ENCODE measurements at regions of chr14 and their contacts with region 1.

Region 1: DNA sequence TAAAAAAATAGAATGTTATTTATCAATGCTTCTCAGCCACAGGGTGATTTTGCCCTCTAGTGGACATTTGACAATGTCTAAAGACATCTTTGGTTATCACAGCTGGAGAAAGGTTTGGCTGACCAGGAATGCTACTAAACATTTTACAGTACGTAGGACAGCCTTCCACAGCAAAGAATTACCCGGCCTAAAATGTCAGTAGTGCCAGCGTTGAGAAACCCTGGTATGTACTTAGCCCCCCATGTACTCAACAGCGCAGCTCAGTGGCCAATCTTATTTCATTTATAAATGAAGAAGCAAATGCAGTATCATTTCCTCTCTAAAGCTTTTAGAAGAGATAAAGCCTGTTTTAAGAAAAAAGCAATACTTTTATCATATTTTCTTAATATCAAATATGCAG is 5.8 kb downstream of the MARK3 start:
- DNase-seq: peak; percentile 72
- ATAC-seq: peak; percentile 77
- H3K4me3 Mint-ChIP-seq: no peak overlapping the region
- H3K27ac Mint-ChIP-seq: no peak overlapping the region
- H3K4me1 Mint-ChIP-seq: peaks cover 59% of the 10 kb centered on the region
- H3K27me3 Mint-ChIP-seq: no peaks in the 10 kb centered on the region
- CTCF ChIP-seq: peak; percentile 86

Region 2: GRCh38 chr14:103333754-103334643 is 57.0 kb before region 1 on chr14 and contains the start of gene EIF5:
- CTCF ChIA-PET with region 1: interaction called, 94 read pairs
- POLR2A ChIA-PET with region 1: interaction called, 5 read pairs
- intact Hi-C with region 1: loop called (anchors 5 kb)
- DNase-seq: peak; percentile 99
- ATAC-seq: peak; percentile 92
- H3K4me3 Mint-ChIP-seq: peak within 1 kb of the TSS; percentile 87
- H3K27ac Mint-ChIP-seq: peak within 1 kb of the TSS; percentile 95
- H3K4me1 Mint-ChIP-seq: peaks cover 56% of the 10 kb centered on the region
- H3K27me3 Mint-ChIP-seq: no peaks in the 10 kb centered on the region
- CTCF ChIP-seq: no peak
- total RNA-seq, gene EIF5: 202 to 207 TPM

Region 3: GRCh38 chr14:103356024-103356682 is 34.9 kb before region 1 on chr14:
- CTCF ChIA-PET with region 1: interaction called, 13 read pairs
- POLR2A ChIA-PET with region 1: no interaction called
- intact Hi-C with region 1: no loop called
- DNase-seq: no peak
- ATAC-seq: no peak
- H3K4me3 Mint-ChIP-seq: no peak overlapping the region
- H3K27ac Mint-ChIP-seq: no peak overlapping the region
- H3K4me1 Mint-ChIP-seq: peaks cover 2% of the 10 kb centered on the region
- H3K27me3 Mint-ChIP-seq: peaks cover 7% of the 10 kb centered on the region
- CTCF ChIP-seq: no peak

Region 4: GRCh38 chr14:103378038-103378854 is 12.8 kb before region 1 on chr14:
- CTCF ChIA-PET with region 1: interaction called, 14 read pairs
- POLR2A ChIA-PET with region 1: no interaction called
- intact Hi-C with region 1: no loop called
- DNase-seq: no peak
- ATAC-seq: no peak
- H3K4me3 Mint-ChIP-seq: no peak overlapping the region
- H3K27ac Mint-ChIP-seq: no peak overlapping the region
- H3K4me1 Mint-ChIP-seq: peaks cover 9% of the 10 kb centered on the region
- H3K27me3 Mint-ChIP-seq: peaks cover 5% of the 10 kb centered on the region
- CTCF ChIP-seq: no peak

Region 5: DNA sequence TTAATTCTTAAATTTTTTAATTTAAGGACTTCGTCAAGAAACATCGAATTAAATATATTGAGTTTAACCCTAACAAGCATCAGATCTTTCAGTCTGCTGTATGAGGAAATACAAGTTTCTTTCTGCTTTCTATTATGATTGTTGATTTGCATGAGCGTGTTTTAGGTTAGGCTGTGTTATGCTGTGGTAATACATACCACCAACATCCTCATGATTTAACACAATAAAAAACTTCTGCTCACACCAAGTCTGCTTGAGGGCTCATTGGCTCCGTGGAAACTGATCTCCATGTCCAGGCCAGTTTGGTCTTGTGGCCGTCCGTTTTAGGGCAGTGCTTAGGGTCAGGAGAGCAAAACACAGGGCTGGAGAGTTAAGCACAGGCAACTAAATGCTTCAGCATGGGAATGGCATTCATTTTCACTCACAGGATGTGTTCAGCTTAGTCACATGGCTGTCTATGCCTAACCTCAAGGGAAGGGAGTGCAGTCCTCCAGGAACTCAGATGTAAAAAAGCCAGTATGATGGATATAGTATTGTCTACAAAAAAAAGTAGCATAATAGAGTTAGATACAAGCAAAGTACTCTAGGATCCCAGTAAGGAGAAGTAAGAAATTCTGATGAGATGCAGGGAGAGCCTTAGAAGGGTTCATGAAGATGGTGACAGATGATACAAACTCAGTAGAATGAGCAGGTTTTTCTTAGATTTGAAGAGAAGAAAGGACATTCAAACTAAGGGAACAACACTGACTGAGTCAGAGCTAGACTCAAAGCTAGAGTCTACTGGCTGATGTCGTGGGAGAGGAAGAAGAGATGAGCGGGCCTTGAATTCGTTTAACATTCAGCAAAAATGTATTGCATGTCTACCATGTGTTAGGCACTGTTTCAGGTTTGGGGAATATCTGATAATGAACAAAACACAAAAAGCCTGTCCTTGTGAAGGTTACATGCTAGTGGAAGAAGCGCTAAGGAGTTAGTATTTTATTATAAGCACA is 10.5 kb after region 1 on chr14:
- CTCF ChIA-PET with region 1: interaction called, 56 read pairs
- POLR2A ChIA-PET with region 1: interaction called, 3 read pairs
- intact Hi-C with region 1: no loop called
- DNase-seq: peak; percentile 28
- ATAC-seq: peak; percentile 84
- H3K4me3 Mint-ChIP-seq: no peak overlapping the region
- H3K27ac Mint-ChIP-seq: peak overlapping the region; percentile 79
- H3K4me1 Mint-ChIP-seq: peaks cover 59% of the 10 kb centered on the region
- H3K27me3 Mint-ChIP-seq: no peaks in the 10 kb centered on the region
- CTCF ChIP-seq: no peak

Region 6: GRCh38 chr14:103418481-103418818 is 27.4 kb after region 1 on chr14:
- CTCF ChIA-PET with region 1: interaction called, 60 read pairs
- POLR2A ChIA-PET with region 1: no interaction called
- intact Hi-C with region 1: no loop called
- DNase-seq: no peak
- ATAC-seq: no peak
- H3K4me3 Mint-ChIP-seq: no peak overlapping the region
- H3K27ac Mint-ChIP-seq: peak overlapping the region; percentile 67
- H3K4me1 Mint-ChIP-seq: peaks cover 44% of the 10 kb centered on the region
- H3K27me3 Mint-ChIP-seq: no peaks in the 10 kb centered on the region
- CTCF ChIP-seq: no peak

Region 7: GRCh38 chr14:103427485-103428443 is 36.7 kb after region 1 on chr14:
- CTCF ChIA-PET with region 1: interaction called, 22 read pairs
- POLR2A ChIA-PET with region 1: interaction called, 4 read pairs
- intact Hi-C with region 1: no loop called
- DNase-seq: peak; percentile 81
- ATAC-seq: peak; percentile 74
- H3K4me3 Mint-ChIP-seq: peak overlapping the region; percentile 24
- H3K27ac Mint-ChIP-seq: peak overlapping the region; percentile 89
- H3K4me1 Mint-ChIP-seq: peaks cover 51% of the 10 kb centered on the region
- H3K27me3 Mint-ChIP-seq: no peaks in the 10 kb centered on the region
- CTCF ChIP-seq: no peak

Measured in activated CD8-positive, alpha-beta T cell treated with anti-CD3 and anti-CD28 coated beads for 36 hours (primary cell).